ENCODE measurements at regions of chr2 and their contacts with region 1.

Region 1: DNA sequence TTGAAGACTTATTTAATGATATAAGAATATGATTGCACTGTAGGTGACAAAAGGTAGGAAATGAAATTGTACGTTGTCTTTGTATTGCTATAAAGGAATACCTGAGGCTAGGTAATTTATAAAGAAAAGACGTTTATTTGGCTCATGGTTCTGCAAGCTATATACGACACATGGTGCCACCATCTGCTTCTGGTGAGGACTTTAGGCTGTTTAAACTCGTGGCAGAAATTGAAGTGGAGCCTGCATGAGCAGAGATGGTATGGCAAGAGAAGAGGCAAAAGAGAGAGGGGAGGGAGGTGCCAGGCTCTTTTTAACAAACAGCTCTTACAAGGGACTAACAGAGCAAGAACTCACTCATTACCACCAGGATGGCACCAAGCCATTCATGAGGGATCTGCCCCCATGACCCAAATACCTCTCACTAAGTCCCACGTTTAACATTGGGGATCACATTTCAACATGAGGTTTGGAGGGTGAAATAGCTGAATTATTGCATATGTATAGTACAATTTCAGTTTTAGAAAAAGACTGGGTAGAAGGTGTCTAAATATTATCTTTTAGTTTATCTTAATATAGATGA is 86.8 kb downstream of the GULP1 start:
- DNase-seq: no peak
- H3K4me3 ChIP-seq: no peak overlapping the region
- H3K27ac ChIP-seq: no peak overlapping the region
- H3K4me1 ChIP-seq: no peaks in the 10 kb centered on the region
- H3K27me3 ChIP-seq: no peaks in the 10 kb centered on the region
- CTCF ChIP-seq: no peak
- POLR2A ChIP-seq: no peak

Region 2: GRCh38 chr2:188291617-188292347 is 86.7 kb before region 1 on chr2 and contains the start of gene GULP1:
- intact Hi-C with region 1: loop called (anchors 10 kb)
- DNase-seq: peak; percentile 77
- H3K4me3 ChIP-seq: peak within 1 kb of the TSS; percentile 23 to 73 (median 46)
- H3K27ac ChIP-seq: peak within 1 kb of the TSS; percentile 49 to 85 (median 78)
- H3K4me1 ChIP-seq: peaks cover 0 to 18% (median 6%) of the 10 kb centered on the region in 6 donors
- H3K27me3 ChIP-seq: peaks cover 0 to 36% (median 10%) of the 10 kb centered on the region in 7 donors
- CTCF ChIP-seq: peak in 9 of 11 experiments; percentile 13 to 59 (median 35)
- POLR2A ChIP-seq: no peak
- total RNA-seq, gene GULP1: 6.2 to 16.6 (median 7.0) TPM

Region 3: GRCh38 chr2:188333751-188334524 is 44.5 kb before region 1 on chr2:
- intact Hi-C with region 1: no loop called
- DNase-seq: no peak
- H3K4me3 ChIP-seq: no peak overlapping the region
- H3K27ac ChIP-seq: peak overlapping the region in 2 of 8 donors; percentile 14 to 26
- H3K4me1 ChIP-seq: peaks cover 0 to 4% (median 0%) of the 10 kb centered on the region in 6 donors
- H3K27me3 ChIP-seq: no peaks in the 10 kb centered on the region
- CTCF ChIP-seq: no peak
- POLR2A ChIP-seq: no peak

Measured in spleen (tissue), 13 donors.